ENCODE measurements at regions of chr11 and their contacts with region 1.

Region 1: DNA sequence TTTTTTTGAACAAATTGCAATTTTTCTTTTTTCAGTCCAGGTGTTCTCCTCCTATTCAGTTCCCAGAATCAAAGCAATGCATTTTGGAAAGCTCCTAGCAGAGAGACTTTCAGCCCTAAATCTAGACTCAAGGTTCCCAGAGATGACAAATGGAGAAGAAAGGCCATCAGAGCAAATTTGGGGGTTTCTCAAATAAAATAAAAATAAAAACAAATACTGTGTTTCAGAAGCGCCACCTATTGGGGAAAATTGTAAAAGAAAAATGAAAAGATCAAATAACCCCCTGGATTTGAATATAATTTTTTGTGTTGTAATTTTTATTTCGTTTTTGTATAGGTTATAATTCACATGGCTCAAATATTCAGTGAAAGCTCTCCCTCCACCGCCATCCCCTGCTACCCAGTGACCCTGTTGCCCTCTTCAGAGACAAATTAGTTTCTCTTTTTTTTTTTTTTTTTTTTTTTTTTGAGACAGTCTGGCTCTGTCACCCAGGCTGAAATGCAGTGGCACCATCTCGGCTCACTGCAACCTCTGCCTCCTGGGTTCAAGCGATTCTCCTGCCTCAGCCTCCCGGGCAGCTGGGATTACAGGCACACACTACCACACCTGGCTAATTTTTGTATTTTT is 6.2 kb upstream of the UBE4A start:
- DNase-seq: no peak
- H3K4me3 ChIP-seq: no peak overlapping the region
- H3K27ac ChIP-seq: no peak overlapping the region
- H3K27me3 ChIP-seq: peaks cover 17% of the 10 kb centered on the region
- CTCF ChIP-seq: peak; percentile 55

Region 2: DNA sequence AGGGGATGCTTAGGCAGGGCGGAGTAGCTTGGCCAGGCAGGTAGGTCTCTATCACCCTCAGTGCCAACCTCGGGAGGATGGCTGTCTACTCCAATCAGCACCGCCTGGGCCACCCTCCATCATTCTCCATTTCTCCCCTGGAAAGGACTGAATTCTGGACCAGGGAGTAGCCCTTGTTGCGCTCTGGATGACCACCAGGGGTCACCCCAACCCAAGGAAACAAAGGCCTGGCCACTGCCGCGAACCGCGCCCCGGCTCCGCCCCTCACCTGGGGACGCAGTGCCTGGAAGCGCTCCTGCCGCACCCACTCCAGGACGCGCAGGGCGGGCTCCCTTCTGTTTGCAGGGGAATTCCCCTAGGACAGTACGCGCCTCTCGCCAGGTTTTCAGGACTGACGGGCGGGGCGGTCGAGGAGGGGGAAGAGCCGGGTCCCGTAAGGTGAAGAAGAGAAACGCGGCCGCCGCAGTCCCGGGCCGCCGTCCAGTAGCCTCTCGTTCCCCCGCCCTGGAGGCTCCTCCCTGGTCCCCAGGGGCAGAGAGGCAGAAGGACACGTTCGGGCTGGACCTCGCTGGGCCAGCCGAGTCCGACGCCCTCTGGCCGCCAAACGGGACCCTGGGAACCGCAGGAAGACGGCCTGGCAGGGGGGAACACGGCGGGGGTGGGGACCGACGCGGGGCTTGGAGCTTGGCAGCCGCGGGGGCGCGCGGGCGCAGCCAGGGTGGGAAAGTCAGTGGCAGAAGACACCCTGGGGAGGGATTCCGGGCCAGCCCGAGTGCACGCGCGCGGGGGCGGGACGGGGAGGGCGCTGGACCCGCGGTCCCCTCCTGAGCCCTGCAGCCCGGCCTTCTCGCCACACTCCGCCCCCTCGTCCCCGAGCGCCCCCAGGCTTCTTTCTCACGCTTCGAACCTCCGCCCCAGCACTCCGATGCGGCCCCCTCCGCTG is 207.6 kb before region 1 on chr11:
- CTCF ChIA-PET with region 1: interaction called, 24 read pairs
- POLR2A ChIA-PET with region 1: no interaction called
- DNase-seq: no peak
- H3K4me3 ChIP-seq: peak overlapping the region; percentile 50
- H3K27ac ChIP-seq: no peak overlapping the region
- H3K27me3 ChIP-seq: peaks cover 50% of the 10 kb centered on the region
- CTCF ChIP-seq: peak; percentile 87

Region 3: GRCh38 chr11:118319337-118319707 is 33.9 kb before region 1 on chr11:
- CTCF ChIA-PET with region 1: no interaction called
- POLR2A ChIA-PET with region 1: no interaction called
- DNase-seq: no peak
- H3K4me3 ChIP-seq: no peak overlapping the region
- H3K27ac ChIP-seq: no peak overlapping the region
- H3K27me3 ChIP-seq: peaks cover 8% of the 10 kb centered on the region
- CTCF ChIP-seq: no peak